T-cell (primary cell): ENCODE measurements at regions of chr6 and their contacts with region 1.

Region 1: DNA sequence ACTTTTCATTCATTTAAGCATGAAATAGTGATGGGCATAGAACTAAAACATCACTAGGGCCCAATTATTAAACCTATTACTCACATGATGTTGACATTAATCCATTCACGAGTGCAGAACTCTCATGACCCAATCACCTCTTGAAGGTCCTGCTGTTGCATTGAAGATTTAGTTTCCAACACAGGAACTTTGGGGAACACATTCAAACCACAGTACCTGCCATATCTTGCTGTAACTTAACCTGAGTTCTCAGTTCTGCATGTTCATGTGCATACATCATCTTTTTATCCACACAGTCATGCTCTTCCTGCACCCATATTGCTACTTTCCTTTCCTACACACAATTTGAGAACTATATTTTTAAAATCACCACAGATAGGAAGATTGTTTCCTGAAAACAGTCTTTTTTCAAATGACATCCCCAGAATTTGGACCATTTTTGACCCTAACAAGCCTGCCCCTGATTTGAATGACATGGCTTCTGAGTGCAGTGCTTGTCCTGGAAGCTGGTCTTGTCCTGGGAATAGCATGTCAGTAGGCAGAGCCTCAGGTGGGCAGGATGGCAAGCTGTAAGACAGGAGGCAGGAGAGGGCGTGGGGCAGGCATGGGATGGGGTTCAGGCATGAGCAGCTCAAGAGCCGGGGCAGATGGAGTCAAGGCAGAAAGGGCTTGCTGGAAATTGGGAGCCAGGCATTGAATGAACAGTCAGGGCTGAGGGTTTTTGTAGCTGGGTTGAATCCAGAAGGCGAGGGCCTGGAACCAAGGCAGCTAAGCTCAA is 49.2 kb upstream of the FOXC1 start:
- DNase-seq: no peak
- ATAC-seq: no peak
- H3K4me3 ChIP-seq: no peak overlapping the region
- H3K4me3 Mint-ChIP-seq: no peak overlapping the region
- H3K27ac ChIP-seq: no peak overlapping the region
- H3K27ac Mint-ChIP-seq: no peak overlapping the region
- H3K4me1 ChIP-seq: peaks cover 0 to 2% of the 10 kb centered on the region in 2 experiments
- H3K4me1 Mint-ChIP-seq: no peaks in the 10 kb centered on the region
- H3K27me3 ChIP-seq: peaks cover 0 to 9% of the 10 kb centered on the region in 2 experiments
- H3K27me3 Mint-ChIP-seq: peaks cover 9 to 19% of the 10 kb centered on the region in 2 donors

Region 2: DNA sequence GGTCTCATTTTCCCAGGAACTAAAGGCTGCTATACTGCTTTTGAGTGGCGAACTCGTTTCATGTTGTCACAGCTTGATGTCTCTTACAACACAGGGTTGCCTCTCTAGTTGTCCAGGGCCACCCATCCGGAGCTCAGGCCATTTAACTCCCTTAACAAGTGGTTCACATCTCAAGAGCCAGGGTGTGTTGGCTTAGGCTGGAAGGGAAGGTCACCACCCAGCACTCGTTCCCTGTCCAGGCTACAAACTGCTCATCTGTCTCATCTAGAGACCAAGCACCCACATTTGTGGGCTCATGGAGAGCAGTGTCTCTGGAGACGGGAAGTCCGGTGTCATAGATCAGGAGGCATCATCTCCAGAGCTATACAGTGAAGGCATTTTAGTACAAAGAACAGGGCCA is 760.7 kb before region 1 on chr6:
- CTCF ChIA-PET with region 1: no interaction called
- POLR2A ChIA-PET with region 1: interaction called in 1 of 2 experiments, 18 read pairs
- DNase-seq: no peak
- ATAC-seq: no peak
- H3K4me3 ChIP-seq: no peak overlapping the region
- H3K4me3 Mint-ChIP-seq: no peak overlapping the region
- H3K27ac ChIP-seq: no peak overlapping the region
- H3K27ac Mint-ChIP-seq: no peak overlapping the region
- H3K4me1 ChIP-seq: no peaks in the 10 kb centered on the region
- H3K4me1 Mint-ChIP-seq: no peaks in the 10 kb centered on the region
- H3K27me3 ChIP-seq: peaks cover 8 to 15% of the 10 kb centered on the region in 2 experiments
- H3K27me3 Mint-ChIP-seq: peaks cover 20 to 43% of the 10 kb centered on the region in 2 donors

Region 3: GRCh38 chr6:1363729-1364572 is 196.5 kb before region 1 on chr6:
- CTCF ChIA-PET with region 1: no interaction called
- POLR2A ChIA-PET with region 1: no interaction called
- DNase-seq: no peak
- ATAC-seq: no peak
- H3K4me3 ChIP-seq: no peak overlapping the region
- H3K4me3 Mint-ChIP-seq: no peak overlapping the region
- H3K27ac ChIP-seq: no peak overlapping the region
- H3K27ac Mint-ChIP-seq: no peak overlapping the region
- H3K4me1 ChIP-seq: no peaks in the 10 kb centered on the region
- H3K4me1 Mint-ChIP-seq: no peaks in the 10 kb centered on the region
- H3K27me3 ChIP-seq: peaks cover 5 to 15% of the 10 kb centered on the region in 2 experiments
- H3K27me3 Mint-ChIP-seq: peaks cover 61 to 66% of the 10 kb centered on the region in 2 donors